Heart right ventricle (tissue), 16 donors: ENCODE measurements at regions of chr22 and their contacts with region 1.

Region 1: DNA sequence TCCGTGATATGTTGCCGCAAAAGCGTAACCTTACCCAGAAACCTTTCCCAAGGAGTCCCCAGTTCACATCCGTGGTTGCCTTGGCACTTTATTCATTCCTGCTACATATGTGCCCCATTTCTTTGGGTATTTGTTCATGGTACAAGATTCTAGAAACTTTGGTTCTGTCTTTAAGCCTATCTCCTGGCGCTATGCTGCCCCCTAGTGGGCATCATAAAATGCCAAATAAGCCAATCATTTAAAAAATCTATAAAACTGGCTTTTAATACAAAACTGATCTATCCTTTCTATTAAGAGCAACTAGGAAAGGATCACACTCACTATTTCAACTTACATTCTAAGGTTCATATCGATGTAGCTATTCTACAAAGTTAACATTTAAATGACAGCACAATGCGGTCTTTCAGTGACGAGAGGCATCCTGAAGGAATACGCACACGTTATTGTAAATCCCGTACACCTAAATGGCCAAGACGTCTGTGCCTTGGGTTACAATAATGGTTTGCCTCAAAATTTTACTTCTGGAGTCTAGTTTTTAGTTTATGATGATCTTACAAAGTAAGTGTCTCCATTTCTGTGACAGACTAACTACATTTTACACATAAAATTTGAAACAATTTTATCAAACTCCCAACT is 16.2 kb downstream of the PIWIL3 start:
- DNase-seq: peak; percentile 24 to 53
- ATAC-seq: no peak
- H3K4me3 ChIP-seq: no peak overlapping the region
- H3K27ac ChIP-seq: no peak overlapping the region
- H3K4me1 ChIP-seq: peaks cover 0 to 4% (median 0%) of the 10 kb centered on the region in 9 donors
- H3K27me3 ChIP-seq: peaks cover 0 to 22% (median 6%) of the 10 kb centered on the region in 7 donors
- CTCF ChIP-seq: peak; percentile 82 to 95 (median 88)

Region 2: DNA sequence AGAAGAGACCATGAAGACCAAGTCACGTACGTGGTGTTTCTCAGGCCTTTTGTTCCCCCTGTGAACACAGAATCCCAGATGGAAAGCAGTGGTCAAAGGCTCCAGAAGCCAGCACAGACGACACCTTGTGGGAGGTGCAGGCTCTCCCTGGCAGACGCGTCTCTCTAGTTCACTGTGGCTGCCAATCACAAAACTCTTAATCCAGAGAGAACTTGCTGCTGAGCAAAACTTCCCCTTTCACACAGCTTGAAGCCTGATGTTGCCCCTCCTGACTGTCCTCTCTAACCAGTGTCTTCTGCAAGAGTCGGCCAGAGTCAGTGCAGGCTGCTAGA is 50.8 kb before region 1 on chr22:
- intact Hi-C with region 1: loop called in 1 of 10 experiments (anchors 5 kb)
- DNase-seq: no peak
- ATAC-seq: peak in 3 of 8 donors; percentile 25 to 52 (median 40)
- H3K4me3 ChIP-seq: no peak overlapping the region
- H3K27ac ChIP-seq: no peak overlapping the region
- H3K4me1 ChIP-seq: peaks cover 0 to 11% (median 3%) of the 10 kb centered on the region in 9 donors
- H3K27me3 ChIP-seq: peaks cover 0 to 11% (median 0%) of the 10 kb centered on the region in 7 donors
- CTCF ChIP-seq: peak in 3 of 9 donors; percentile 14 to 27 (median 15)

Region 3: DNA sequence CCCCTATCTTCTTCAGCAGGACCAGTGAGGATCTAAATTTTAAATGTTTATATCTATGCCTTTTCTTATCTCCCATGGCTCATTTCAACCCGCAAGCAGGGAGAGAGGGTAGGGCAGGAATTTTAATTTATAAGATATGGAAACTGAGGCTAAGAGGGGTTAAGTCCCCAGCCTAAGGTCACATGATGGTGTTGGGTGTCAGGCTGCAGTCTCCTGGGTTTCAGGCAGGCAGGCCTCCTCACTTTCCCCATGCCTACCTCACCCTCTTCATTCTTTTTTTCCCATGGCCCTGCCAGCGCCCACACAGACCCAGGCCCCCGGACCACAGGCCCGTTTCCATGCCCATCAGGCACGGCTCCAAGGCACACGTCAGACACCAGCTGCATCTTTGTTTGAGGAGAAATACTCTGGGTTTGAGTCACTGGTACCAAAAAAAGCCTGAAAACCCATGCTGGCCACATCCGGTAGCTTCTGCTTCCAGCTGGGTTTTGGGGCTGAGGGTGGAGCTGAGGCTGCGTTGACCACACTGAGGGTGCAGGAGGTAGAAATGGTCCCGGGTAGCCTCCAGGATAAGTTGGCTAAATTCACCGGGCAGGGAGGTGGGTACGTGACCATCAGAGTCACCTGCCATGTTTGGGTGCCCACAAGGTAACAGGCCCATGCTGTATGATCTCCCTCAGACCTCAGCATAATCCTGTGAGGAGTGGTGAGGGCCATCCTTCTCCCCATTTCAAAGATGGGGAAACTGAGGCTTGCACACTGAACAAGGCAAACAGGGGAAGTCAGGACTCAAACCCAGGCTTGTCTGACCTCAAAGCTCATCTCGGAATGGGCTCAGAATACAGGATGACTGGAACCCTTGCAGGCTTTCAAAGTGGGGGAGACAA is 1852.0 kb after region 1 on chr22:
- intact Hi-C with region 1: no loop called
- DNase-seq: peak; percentile 21 to 32
- ATAC-seq: peak in 6 of 8 donors; percentile 42 to 67 (median 50)
- H3K4me3 ChIP-seq: no peak overlapping the region
- H3K27ac ChIP-seq: peak overlapping the region in 1 of 10 donors; percentile 47
- H3K4me1 ChIP-seq: peaks cover 0 to 14% (median 0%) of the 10 kb centered on the region in 9 donors
- H3K27me3 ChIP-seq: peaks cover 0 to 29% (median 11%) of the 10 kb centered on the region in 7 donors
- CTCF ChIP-seq: no peak